OCI-LY7 (cell line): ENCODE measurements at regions of chr1 and their contacts with region 1.

Region 1: GRCh38 chr1:208289716-208290115 is 45.5 kb upstream of the PLXNA2 start:
- DNase-seq: no peak
- H3K4me3 ChIP-seq: no peak overlapping the region
- H3K27ac ChIP-seq: no peak overlapping the region
- H3K4me1 ChIP-seq: no peaks in the 10 kb centered on the region
- CTCF ChIP-seq: no peak

Region 2: GRCh38 chr1:207848234-207848633 is 441.5 kb before region 1 on chr1:
- CTCF ChIA-PET with region 1: no interaction called
- POLR2A ChIA-PET with region 1: no interaction called
- intact Hi-C with region 1: no loop called
- DNase-seq: no peak
- H3K4me3 ChIP-seq: no peak overlapping the region
- H3K27ac ChIP-seq: no peak overlapping the region
- H3K4me1 ChIP-seq: no peaks in the 10 kb centered on the region
- CTCF ChIP-seq: no peak

Region 3: GRCh38 chr1:208302699-208303238 is 13.1 kb after region 1 on chr1:
- CTCF ChIA-PET with region 1: no interaction called
- POLR2A ChIA-PET with region 1: interaction called, 10 read pairs
- intact Hi-C with region 1: no loop called
- DNase-seq: no peak
- H3K4me3 ChIP-seq: no peak overlapping the region
- H3K27ac ChIP-seq: no peak overlapping the region
- H3K4me1 ChIP-seq: no peaks in the 10 kb centered on the region
- CTCF ChIP-seq: no peak

Region 4: DNA sequence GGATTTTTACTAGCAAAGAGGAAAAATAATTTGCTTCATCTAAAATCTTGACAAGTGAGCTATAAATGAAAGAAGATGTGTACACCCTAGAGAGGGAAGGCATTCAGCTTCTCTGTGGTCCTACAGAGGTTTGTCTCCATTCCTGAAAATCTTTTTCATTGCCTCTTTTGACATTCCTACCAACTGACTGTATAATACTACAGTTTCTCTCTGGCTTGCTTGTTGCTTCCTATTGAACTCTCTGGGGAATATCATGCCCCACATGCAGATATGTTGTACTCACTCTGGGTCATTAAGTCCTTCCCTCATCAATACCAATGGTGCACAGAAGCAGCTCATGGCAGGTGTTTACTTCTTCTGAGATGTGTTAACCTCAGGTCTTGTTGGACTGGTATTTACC is 325.7 kb after region 1 on chr1:
- CTCF ChIA-PET with region 1: no interaction called
- POLR2A ChIA-PET with region 1: no interaction called
- intact Hi-C with region 1: no loop called
- DNase-seq: no peak
- H3K4me3 ChIP-seq: no peak overlapping the region
- H3K27ac ChIP-seq: no peak overlapping the region
- H3K4me1 ChIP-seq: no peaks in the 10 kb centered on the region
- CTCF ChIP-seq: no peak